Caco-2 (cell line): ENCODE measurements at regions of chr5 and their contacts with region 1.

Region 1: GRCh38 chr5:175274171-175274570 is 169.8 kb downstream of the DRD1 start:
- DNase-seq: no peak
- H3K4me3 ChIP-seq: no peak overlapping the region
- H3K4me3 Mint-ChIP-seq: no peak overlapping the region
- H3K27ac Mint-ChIP-seq: no peak overlapping the region
- H3K4me1 ChIP-seq: no peaks in the 10 kb centered on the region
- H3K4me1 Mint-ChIP-seq: peaks cover 6% of the 10 kb centered on the region
- H3K27me3 ChIP-seq: no peaks in the 10 kb centered on the region
- H3K27me3 Mint-ChIP-seq: no peaks in the 10 kb centered on the region
- CTCF ChIP-seq: no peak

Region 2: GRCh38 chr5:174972291-174972690 is 301.9 kb before region 1 on chr5:
- CTCF ChIA-PET with region 1: no interaction called
- POLR2A ChIA-PET with region 1: no interaction called
- intact Hi-C with region 1: loop called (anchors 5 kb)
- DNase-seq: peak in 1 of 2 experiments; percentile 50
- H3K4me3 ChIP-seq: no peak overlapping the region
- H3K4me3 Mint-ChIP-seq: no peak overlapping the region
- H3K27ac Mint-ChIP-seq: no peak overlapping the region
- H3K4me1 ChIP-seq: peaks cover 14% of the 10 kb centered on the region
- H3K4me1 Mint-ChIP-seq: peaks cover 11% of the 10 kb centered on the region
- H3K27me3 ChIP-seq: no peaks in the 10 kb centered on the region
- H3K27me3 Mint-ChIP-seq: peaks cover 6% of the 10 kb centered on the region
- CTCF ChIP-seq: no peak